ENCODE measurements at regions of chr11 and their contacts with region 1.

Region 1: GRCh38 chr11:34366522-34366921 is 8.7 kb upstream of the ABTB2 start:
- DNase-seq: peak in 3 of 7 donors; percentile 28 to 54 (median 50)
- H3K4me3 ChIP-seq: no peak overlapping the region
- H3K27ac ChIP-seq: no peak overlapping the region
- H3K4me1 ChIP-seq: peaks cover 0 to 5% of the 10 kb centered on the region in 2 donors
- H3K27me3 ChIP-seq: no peaks in the 10 kb centered on the region
- CTCF ChIP-seq: peak in 3 of 6 experiments; percentile 36 to 47 (median 38)
- POLR2A ChIP-seq: no peak

Region 2: DNA sequence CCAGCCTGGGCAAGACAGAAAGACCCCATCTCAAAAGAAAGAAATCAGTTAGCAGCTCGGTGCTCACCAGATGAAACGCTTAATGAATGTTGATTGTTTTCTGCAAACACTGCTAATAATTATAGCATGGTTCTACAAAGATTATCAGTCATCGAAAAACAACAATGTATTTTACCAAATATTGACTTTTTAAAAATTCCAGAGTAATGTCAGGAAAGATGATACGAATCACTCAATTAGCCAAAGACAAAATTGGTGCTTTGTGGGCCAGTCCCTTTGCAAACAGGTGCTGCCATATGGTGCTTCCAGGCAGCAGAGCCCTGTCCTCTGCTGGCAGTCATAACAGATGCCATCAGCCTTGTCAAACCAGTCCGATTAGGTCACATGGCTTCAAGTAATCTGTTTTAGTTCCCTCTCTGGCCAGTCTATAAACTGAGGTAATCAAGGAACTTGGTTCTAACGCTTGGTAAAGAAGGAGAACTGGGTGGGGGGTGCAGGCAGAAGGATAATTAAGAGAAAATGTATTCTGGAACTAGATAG is 364.2 kb before region 1 on chr11:
- intact Hi-C with region 1: loop called in 1 of 2 experiments (anchors 10 kb)
- DNase-seq: no peak
- H3K4me3 ChIP-seq: no peak overlapping the region
- H3K27ac ChIP-seq: no peak overlapping the region
- H3K4me1 ChIP-seq: peaks cover 0 to 2% of the 10 kb centered on the region in 2 donors
- H3K27me3 ChIP-seq: no peaks in the 10 kb centered on the region
- CTCF ChIP-seq: no peak
- POLR2A ChIP-seq: no peak

Region 3: DNA sequence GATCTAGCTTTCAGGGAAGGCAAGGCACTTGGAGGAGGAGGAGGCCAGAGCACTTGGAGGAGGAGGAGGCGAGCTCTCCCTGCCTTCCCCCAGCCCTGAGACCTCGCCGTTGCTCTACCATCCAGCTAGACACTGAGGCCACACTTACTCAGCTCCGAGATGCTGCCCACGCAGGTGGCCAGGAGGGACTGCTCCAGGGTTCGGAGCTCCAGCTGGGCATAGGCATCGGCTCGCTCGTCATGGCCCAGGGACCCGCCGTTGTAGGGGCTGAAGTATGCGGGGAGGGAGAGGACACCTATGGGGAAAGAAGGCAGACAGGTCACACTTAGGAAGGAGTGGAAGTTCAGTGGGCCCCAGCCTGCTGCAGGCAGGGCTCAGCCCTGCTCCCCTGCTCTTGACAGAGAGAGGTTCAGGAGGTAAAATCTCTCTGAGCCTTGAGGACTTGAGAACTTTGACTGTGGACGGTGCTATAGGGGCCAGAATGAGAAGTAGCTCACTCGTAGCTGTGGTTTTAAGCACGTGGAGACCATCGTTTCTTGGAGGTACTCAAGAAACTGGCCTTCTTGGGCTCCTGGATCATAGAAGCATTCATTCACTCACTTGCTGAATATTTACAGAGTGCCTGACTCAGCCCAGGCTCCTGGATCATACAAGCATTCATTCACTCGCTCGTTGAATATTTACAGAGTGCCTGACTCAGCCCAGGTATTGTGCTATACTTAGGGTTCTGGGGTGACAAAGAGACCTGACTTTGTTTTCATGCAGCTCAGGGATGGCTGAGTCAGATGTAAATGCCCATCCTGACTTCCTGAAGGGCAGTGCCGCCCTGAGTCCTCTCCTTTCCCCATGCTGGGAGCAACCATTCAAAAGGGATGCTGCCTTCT is 161.9 kb before region 1 on chr11:
- intact Hi-C with region 1: no loop called
- DNase-seq: no peak
- H3K4me3 ChIP-seq: no peak overlapping the region
- H3K27ac ChIP-seq: no peak overlapping the region
- H3K4me1 ChIP-seq: no peaks in the 10 kb centered on the region
- H3K27me3 ChIP-seq: no peaks in the 10 kb centered on the region
- CTCF ChIP-seq: no peak
- POLR2A ChIP-seq: no peak

Region 4: DNA sequence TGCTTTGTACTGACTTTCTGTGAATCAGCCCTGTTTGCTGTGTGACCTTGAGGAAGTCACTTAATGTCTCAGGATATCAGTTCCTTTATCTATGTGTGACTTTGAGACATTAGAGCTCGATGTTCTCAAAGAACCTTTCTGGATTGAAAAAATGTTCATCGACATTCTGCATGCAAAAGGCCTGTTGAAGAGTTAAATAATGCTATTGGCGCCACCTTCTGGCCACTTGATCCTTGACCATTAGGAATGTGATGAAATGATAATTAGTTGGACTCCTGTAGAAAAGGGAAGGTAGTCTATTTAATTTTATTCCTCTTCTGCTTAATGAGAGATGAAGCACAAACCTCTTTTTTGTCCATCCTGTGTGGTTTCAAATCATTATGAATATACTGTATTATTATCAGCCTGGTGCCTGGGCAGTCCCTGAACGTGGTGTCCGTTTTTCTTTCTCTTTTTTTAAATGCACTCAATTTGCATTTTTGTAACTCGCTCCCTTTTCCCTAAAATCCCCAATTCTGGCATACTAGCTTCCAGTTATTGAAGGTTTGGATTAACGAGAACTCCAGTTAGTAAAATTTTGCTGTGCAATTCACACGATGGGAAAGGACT is 126.4 kb after region 1 on chr11:
- intact Hi-C with region 1: loop called in 1 of 2 experiments (anchors 5 kb)
- DNase-seq: peak; percentile 42 to 88 (median 67)
- H3K4me3 ChIP-seq: no peak overlapping the region
- H3K27ac ChIP-seq: no peak overlapping the region
- H3K4me1 ChIP-seq: no peaks in the 10 kb centered on the region
- H3K27me3 ChIP-seq: no peaks in the 10 kb centered on the region
- CTCF ChIP-seq: peak; percentile 60 to 76 (median 70)
- POLR2A ChIP-seq: no peak

Region 5: DNA sequence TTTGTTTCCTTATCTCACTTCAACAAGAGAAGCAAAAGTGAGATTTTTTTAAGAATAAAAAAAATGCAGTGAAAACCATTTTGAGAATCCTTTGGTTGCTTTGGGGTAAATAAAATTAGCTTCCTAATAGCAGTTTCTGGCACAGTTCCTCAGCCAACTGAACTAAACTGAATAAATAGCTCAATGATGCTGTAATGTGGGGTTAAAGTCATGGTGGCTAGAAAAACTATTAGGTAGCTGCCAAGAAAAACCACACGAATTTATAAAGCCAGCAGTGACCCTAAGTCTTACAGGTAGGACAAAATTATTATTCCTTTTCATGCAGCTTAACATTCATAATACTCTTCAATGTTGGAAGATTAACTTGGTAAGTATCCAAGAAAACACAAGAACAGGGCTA is 407.3 kb after region 1 on chr11:
- intact Hi-C with region 1: no loop called
- DNase-seq: no peak
- H3K4me3 ChIP-seq: no peak overlapping the region
- H3K27ac ChIP-seq: no peak overlapping the region
- H3K4me1 ChIP-seq: no peaks in the 10 kb centered on the region
- H3K27me3 ChIP-seq: no peaks in the 10 kb centered on the region
- CTCF ChIP-seq: no peak
- POLR2A ChIP-seq: no peak